ENCODE measurements at regions of chr3 and their contacts with region 1.

Region 1: GRCh38 chr3:14234251-14235002 is 55.8 kb downstream of the LSM3 start:
- DNase-seq: no peak
- H3K4me3 ChIP-seq: no peak overlapping the region
- H3K27me3 ChIP-seq: no peaks in the 10 kb centered on the region
- CTCF ChIP-seq: no peak

Region 2: GRCh38 chr3:14188041-14188754 is 46.2 kb before region 1 on chr3:
- CTCF ChIA-PET with region 1: no interaction called
- POLR2A ChIA-PET with region 1: no interaction called
- DNase-seq: no peak
- H3K4me3 ChIP-seq: no peak overlapping the region
- H3K27me3 ChIP-seq: no peaks in the 10 kb centered on the region
- CTCF ChIP-seq: no peak

Region 3: DNA sequence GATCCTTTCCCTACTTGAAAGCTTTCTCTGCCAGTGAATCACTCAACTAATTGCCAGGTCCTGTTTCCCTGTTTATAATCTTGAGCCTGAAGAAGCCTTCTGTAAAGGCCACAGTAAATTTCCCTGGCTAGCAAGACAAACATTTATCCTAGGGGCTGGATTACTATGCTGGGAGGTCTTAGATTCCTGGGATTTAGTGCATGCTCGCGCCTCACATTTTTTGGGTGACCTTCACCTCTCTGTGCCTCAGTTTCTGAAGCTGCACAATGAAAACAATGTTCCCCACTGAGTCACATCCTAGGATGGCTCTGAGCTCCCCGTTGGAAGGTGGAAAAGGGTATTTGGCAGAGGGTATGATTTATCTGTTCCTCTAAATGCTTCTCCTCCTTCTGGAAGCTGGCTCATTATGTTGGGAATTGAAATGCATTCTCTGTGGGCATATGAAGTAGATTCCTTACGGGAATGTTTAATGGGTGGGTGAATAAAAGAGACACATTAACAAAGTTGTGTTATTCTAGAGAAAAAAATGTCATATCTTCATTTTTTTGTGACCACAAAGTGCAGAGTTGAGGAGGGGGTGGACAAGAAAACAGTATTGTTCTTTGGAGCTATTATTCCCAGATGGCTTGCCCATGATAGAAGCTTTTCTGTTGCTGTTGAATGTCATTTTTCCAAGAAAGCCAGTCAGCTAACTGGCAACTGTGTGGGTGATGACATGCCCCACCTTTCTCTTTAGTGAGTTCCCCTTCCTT is 23.4 kb before region 1 on chr3:
- CTCF ChIA-PET with region 1: interaction called, 11 read pairs
- POLR2A ChIA-PET with region 1: interaction called, 7 read pairs
- DNase-seq: peak; percentile 99
- H3K4me3 ChIP-seq: no peak overlapping the region
- H3K27me3 ChIP-seq: no peaks in the 10 kb centered on the region
- CTCF ChIP-seq: no peak

Region 4: DNA sequence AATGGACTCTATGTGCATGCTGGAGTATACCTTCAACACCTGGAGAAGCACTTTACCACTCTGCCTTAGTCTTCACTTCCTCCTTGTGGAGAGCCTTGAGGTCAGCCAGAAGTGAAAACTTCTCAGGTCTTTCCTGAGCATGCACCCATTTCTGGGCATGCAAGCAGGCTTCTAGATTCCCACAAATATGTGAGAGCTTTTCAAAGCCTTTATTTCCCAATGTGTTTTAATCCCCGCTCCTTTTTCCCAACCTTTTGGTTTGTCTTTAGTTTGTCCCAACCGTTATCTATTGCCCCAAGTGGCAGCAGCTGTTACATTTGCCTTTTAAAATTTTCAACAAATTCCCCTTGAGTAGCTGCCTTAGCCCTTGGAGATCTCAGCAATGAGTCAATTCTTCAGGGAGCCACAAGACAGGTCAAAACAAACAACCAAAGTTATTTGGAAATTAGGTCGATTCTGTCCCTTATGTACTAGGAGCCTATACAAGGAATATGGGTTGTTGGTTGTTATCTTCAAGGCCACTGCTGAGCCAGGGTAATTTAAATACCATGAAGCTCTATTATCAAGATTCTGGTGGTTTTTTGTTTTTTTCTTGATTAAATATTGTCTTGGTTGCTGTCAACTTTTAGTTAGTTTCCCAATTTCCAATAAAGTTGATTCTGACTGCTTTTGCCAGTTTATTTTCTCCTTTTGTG is 11.4 kb before region 1 on chr3:
- CTCF ChIA-PET with region 1: interaction called, 13 read pairs
- POLR2A ChIA-PET with region 1: no interaction called
- DNase-seq: no peak
- H3K4me3 ChIP-seq: no peak overlapping the region
- H3K27me3 ChIP-seq: no peaks in the 10 kb centered on the region
- CTCF ChIP-seq: peak; percentile 18; the same call in 1 of the 2 replicates

Region 5: DNA sequence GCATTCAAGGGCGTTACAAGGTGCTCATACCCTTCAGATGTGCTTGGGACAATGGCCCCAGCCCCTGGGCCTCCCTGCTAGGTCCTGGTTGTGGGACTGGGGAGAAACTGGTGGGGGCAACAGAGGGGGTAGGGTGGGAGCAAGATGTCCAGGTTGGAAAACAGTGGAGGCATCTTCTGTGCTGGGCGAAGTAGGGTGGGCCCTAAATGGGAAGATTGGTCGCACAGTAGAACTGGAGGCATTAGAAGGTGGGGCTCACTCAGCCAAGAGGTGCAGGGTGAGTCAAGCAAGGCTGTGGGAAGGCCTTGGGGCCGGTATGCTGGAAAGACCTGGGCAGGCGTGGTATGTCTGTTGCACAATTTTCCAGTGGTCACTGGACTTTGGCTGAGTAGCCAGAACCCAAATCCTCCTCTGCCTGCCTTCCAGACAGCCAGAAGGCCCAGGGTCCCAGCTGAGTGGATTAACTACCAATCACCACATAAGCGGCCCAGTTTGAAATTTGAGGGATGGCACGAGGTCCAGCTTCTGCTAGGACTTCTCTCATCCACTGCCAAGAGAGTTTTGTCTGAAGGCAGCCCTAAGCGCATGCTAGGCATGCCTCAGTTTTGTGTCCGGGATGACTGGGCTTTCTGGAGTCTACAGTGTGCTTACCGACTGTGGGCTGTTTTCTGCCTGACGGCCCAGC is 18.7 kb after region 1 on chr3:
- CTCF ChIA-PET with region 1: interaction called, 13 read pairs
- POLR2A ChIA-PET with region 1: interaction called, 9 read pairs
- DNase-seq: peak; percentile 34
- H3K4me3 ChIP-seq: no peak overlapping the region
- H3K27me3 ChIP-seq: no peaks in the 10 kb centered on the region
- CTCF ChIP-seq: no peak